Naive thymus-derived CD4-positive, alpha-beta T cell (primary cell): ENCODE measurements at regions of chr1 and their contacts with region 1.

Region 1: GRCh38 chr1:84573967-84574842 is at the start of gene CTBS:
- DNase-seq: peak; percentile 69 to 84 (median 82)
- ATAC-seq: peak; percentile 96
- H3K4me3 ChIP-seq: peak within 1 kb of the TSS; percentile 77
- H3K4me3 Mint-ChIP-seq: peak within 1 kb of the TSS; percentile 97 to 99 (median 99)
- H3K27ac ChIP-seq: peak within 1 kb of the TSS; percentile 99
- H3K27ac Mint-ChIP-seq: peak within 1 kb of the TSS; percentile 98 to 100 (median 100)
- H3K4me1 ChIP-seq: peaks cover 9 to 13% of the 10 kb centered on the region in 2 donors
- H3K4me1 Mint-ChIP-seq: peaks cover 29 to 51% (median 40%) of the 10 kb centered on the region in 7 donors
- H3K27me3 ChIP-seq: no peaks in the 10 kb centered on the region
- H3K27me3 Mint-ChIP-seq: peaks cover 0 to 2% (median 0%) of the 10 kb centered on the region in 5 donors
- total RNA-seq, gene CTBS: 17.4 to 22.3 (median 19.0) TPM

Region 2: DNA sequence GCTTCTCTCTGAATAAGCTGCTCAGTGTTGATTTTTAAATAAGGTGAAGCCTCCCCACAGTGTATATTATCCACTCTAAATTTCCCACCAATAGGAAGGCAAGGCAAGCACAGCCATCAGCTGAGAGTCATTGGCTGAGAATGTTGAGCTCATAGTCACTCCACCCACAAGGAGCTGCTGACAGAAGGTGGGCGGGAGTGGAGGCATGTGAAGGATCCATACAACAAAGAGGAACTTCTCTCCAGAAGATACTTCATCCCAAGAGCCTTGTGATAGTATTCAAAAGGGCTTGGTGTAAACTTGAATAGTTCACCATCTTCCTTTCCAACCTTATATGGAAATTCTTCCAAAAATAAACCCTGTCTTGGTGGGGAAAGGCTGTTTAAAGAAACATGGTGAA is 229.9 kb before region 1 on chr1:
- CTCF ChIA-PET with region 1: no interaction called
- POLR2A ChIA-PET with region 1: no interaction called
- intact Hi-C with region 1: no loop called
- DNase-seq: no peak
- ATAC-seq: no peak
- H3K4me3 ChIP-seq: no peak overlapping the region
- H3K4me3 Mint-ChIP-seq: no peak overlapping the region
- H3K27ac ChIP-seq: no peak overlapping the region
- H3K27ac Mint-ChIP-seq: no peak overlapping the region
- H3K4me1 ChIP-seq: no peaks in the 10 kb centered on the region
- H3K4me1 Mint-ChIP-seq: no peaks in the 10 kb centered on the region
- H3K27me3 ChIP-seq: no peaks in the 10 kb centered on the region
- H3K27me3 Mint-ChIP-seq: peaks cover 0 to 5% (median 4%) of the 10 kb centered on the region in 5 donors

Region 3: GRCh38 chr1:84433258-84434080 is 140.7 kb before region 1 on chr1:
- CTCF ChIA-PET with region 1: interaction called, 3 read pairs
- POLR2A ChIA-PET with region 1: interaction called, 11 read pairs
- intact Hi-C with region 1: loop called (anchors 2 kb)
- DNase-seq: peak in 7 of 9 donors; percentile 71 to 85 (median 79)
- ATAC-seq: peak; percentile 92
- H3K4me3 ChIP-seq: peak overlapping the region; percentile 34
- H3K4me3 Mint-ChIP-seq: peak overlapping the region in 9 of 10 donors; percentile 29 to 82 (median 77)
- H3K27ac ChIP-seq: peak overlapping the region; percentile 73
- H3K27ac Mint-ChIP-seq: peak overlapping the region in 2 of 9 donors; percentile 85 to 90
- H3K4me1 ChIP-seq: peaks cover 23 to 41% of the 10 kb centered on the region in 2 donors
- H3K4me1 Mint-ChIP-seq: peaks cover 0 to 12% (median 9%) of the 10 kb centered on the region in 7 donors
- H3K27me3 ChIP-seq: no peaks in the 10 kb centered on the region
- H3K27me3 Mint-ChIP-seq: no peaks in the 10 kb centered on the region

Region 4: GRCh38 chr1:84506002-84506728 is 68.0 kb before region 1 on chr1 and contains the starts of genes GNG5 and SPATA1:
- CTCF ChIA-PET with region 1: interaction called, 3 read pairs
- POLR2A ChIA-PET with region 1: interaction called, 32 read pairs
- intact Hi-C with region 1: loop called (anchors 1 kb)
- DNase-seq: peak; percentile 94 to 98 (median 96)
- ATAC-seq: peak; percentile 95
- H3K4me3 ChIP-seq: peak within 1 kb of the TSS; percentile 94
- H3K4me3 Mint-ChIP-seq: peak within 1 kb of the TSS; percentile 94 to 100 (median 98)
- H3K27ac ChIP-seq: peak within 1 kb of the TSS; percentile 76
- H3K27ac Mint-ChIP-seq: peak within 1 kb of the TSS; percentile 93 to 99 (median 96)
- H3K4me1 ChIP-seq: peaks cover 15 to 27% of the 10 kb centered on the region in 2 donors
- H3K4me1 Mint-ChIP-seq: peaks cover 18 to 54% (median 50%) of the 10 kb centered on the region in 7 donors
- H3K27me3 ChIP-seq: no peaks in the 10 kb centered on the region
- H3K27me3 Mint-ChIP-seq: peaks cover 0 to 2% (median 0%) of the 10 kb centered on the region in 5 donors
- total RNA-seq, gene GNG5: 24.8 to 90.7 (median 28.9) TPM
- total RNA-seq, gene SPATA1: 1.7 to 3.6 (median 2.2) TPM in 4 of 5 experiments, not detected in the other

Region 5: DNA sequence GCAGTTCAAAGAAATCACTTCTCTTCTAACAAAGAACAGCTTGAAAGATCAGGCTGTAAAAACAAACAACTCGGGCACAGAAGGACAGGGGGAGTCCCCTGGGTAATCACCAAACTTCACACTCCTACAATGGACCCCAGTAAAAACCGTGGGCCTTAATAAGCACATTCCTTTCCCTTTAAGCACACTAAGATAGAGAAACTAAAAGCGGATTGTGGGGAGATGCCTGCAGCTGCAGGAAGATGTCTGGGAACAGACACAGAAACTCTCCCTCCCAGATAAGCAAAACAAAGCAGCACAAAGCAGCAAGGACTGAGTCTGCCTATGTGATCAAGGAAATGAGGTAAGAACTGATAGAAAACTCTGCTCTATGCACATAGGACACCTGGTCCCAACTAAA is 37.6 kb after region 1 on chr1:
- CTCF ChIA-PET with region 1: no interaction called
- POLR2A ChIA-PET with region 1: interaction called, 20 read pairs
- intact Hi-C with region 1: loop called in 1 of 2 experiments (anchors 2 kb)
- DNase-seq: peak in 6 of 9 donors; percentile 15 to 58 (median 26)
- ATAC-seq: peak; percentile 90
- H3K4me3 ChIP-seq: no peak overlapping the region
- H3K4me3 Mint-ChIP-seq: peak overlapping the region in 9 of 10 donors; percentile 43 to 81 (median 61)
- H3K27ac ChIP-seq: peak overlapping the region; percentile 60
- H3K27ac Mint-ChIP-seq: peak overlapping the region in 8 of 9 donors; percentile 76 to 95 (median 90)
- H3K4me1 ChIP-seq: peaks cover 0 to 11% of the 10 kb centered on the region in 2 donors
- H3K4me1 Mint-ChIP-seq: peaks cover 4 to 24% (median 16%) of the 10 kb centered on the region in 7 donors
- H3K27me3 ChIP-seq: no peaks in the 10 kb centered on the region
- H3K27me3 Mint-ChIP-seq: peaks cover 0 to under 1% (median 0%) of the 10 kb centered on the region in 5 donors

Region 6: GRCh38 chr1:84862810-84863251 is 288.6 kb after region 1 on chr1:
- CTCF ChIA-PET with region 1: no interaction called
- POLR2A ChIA-PET with region 1: no interaction called
- intact Hi-C with region 1: loop called in 1 of 2 experiments (anchors 5 kb)
- DNase-seq: peak in 8 of 9 donors; percentile 42 to 81 (median 66)
- ATAC-seq: peak; percentile 87
- H3K4me3 ChIP-seq: peak overlapping the region; percentile 44
- H3K4me3 Mint-ChIP-seq: peak overlapping the region; percentile 71 to 89 (median 83)
- H3K27ac ChIP-seq: peak overlapping the region; percentile 67
- H3K27ac Mint-ChIP-seq: peak overlapping the region; percentile 83 to 95 (median 92)
- H3K4me1 ChIP-seq: peaks cover 30 to 46% of the 10 kb centered on the region in 2 donors
- H3K4me1 Mint-ChIP-seq: peaks cover 31 to 69% (median 59%) of the 10 kb centered on the region in 7 donors
- H3K27me3 ChIP-seq: no peaks in the 10 kb centered on the region
- H3K27me3 Mint-ChIP-seq: peaks cover 0 to 6% (median 0%) of the 10 kb centered on the region in 5 donors

Region 7: DNA sequence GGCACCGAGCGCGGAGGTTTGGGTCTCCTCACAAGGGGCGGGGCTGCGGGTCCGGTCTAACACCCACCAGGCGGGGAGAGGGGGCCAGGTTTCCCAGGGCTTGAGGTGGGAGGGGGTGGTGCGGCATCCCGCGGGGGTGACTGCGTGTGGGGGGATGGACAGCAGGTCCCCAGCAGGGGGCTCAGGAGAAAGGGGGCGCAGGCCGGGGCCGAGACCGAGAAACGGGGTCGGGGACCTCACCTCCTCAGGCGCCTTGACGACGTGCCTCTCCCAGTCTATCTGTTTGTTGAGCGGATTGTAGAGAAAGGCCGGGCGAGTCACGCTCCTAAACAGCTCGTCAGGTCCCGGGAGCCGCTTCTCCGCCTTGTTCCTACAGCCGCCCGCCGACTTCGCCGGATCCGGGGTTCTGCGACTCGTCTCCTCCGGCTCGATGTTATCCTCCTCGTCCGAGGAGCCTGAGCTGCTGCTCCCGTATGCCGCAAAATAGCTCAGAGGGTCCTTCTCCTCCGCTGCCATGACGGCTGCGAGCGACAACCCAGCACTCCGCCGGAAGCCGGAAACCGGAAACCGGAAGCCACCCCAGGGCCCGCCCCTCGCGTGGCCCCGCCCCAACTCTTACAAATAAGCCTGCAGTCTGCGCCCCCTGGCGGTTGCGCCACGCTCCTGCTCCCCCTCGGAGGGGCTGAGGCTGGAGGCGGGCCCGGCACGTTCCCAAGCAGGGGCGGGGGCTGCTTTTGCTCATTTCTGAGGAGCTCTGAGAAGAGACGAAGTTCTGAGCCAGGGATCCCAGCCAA is 685.1 kb after region 1 on chr1 and contains the start of gene C1orf52:
- CTCF ChIA-PET with region 1: no interaction called
- POLR2A ChIA-PET with region 1: no interaction called
- intact Hi-C with region 1: loop called in 1 of 2 experiments (anchors 5 kb)
- DNase-seq: peak; percentile 92 to 99 (median 96)
- ATAC-seq: peak; percentile 99
- H3K4me3 ChIP-seq: peak within 1 kb of the TSS; percentile 83
- H3K4me3 Mint-ChIP-seq: peak within 1 kb of the TSS; percentile 93 to 99 (median 98)
- H3K27ac ChIP-seq: peak within 1 kb of the TSS; percentile 90
- H3K27ac Mint-ChIP-seq: peak within 1 kb of the TSS; percentile 91 to 98 (median 96)
- H3K4me1 ChIP-seq: peaks cover 14 to 16% of the 10 kb centered on the region in 2 donors
- H3K4me1 Mint-ChIP-seq: peaks cover 19 to 52% (median 45%) of the 10 kb centered on the region in 7 donors
- H3K27me3 ChIP-seq: no peaks in the 10 kb centered on the region
- H3K27me3 Mint-ChIP-seq: no peaks in the 10 kb centered on the region
- total RNA-seq, gene C1orf52: 25.7 to 55.4 (median 46.1) TPM